Dendritic cell treated with granulocyte-macrophage colony-stimulating factor and Interleukin-4, amounts not matched to agents 40 ng/mL and 50 ng/mL, for 4 days (primary cell): ENCODE measurements at regions of chr14 and their contacts with region 1.

Region 1: GRCh38 chr14:39005044-39005880 is 97.8 kb downstream of the SEC23A start:
- H3K4me3 Mint-ChIP-seq: no peak overlapping the region
- H3K27ac Mint-ChIP-seq: no peak overlapping the region
- H3K4me1 Mint-ChIP-seq: peaks cover 28% of the 10 kb centered on the region
- H3K27me3 Mint-ChIP-seq: no peaks in the 10 kb centered on the region

Region 2: GRCh38 chr14:38873941-38874612 is 131.2 kb before region 1 on chr14:
- intact Hi-C with region 1: loop called (anchors 5 kb)
- H3K4me3 Mint-ChIP-seq: no peak overlapping the region
- H3K27ac Mint-ChIP-seq: no peak overlapping the region
- H3K4me1 Mint-ChIP-seq: peaks cover 20% of the 10 kb centered on the region
- H3K27me3 Mint-ChIP-seq: no peaks in the 10 kb centered on the region